AG04449 (cell line): ENCODE measurements at regions of chr1 and their contacts with region 1.

Region 1: GRCh38 chr1:205430696-205431305 is 8.9 kb upstream of the LEMD1 start:
- DNase-seq: no peak
- H3K4me3 ChIP-seq: peak overlapping the region; percentile 56
- CTCF ChIP-seq: peak; percentile 82

Region 2: DNA sequence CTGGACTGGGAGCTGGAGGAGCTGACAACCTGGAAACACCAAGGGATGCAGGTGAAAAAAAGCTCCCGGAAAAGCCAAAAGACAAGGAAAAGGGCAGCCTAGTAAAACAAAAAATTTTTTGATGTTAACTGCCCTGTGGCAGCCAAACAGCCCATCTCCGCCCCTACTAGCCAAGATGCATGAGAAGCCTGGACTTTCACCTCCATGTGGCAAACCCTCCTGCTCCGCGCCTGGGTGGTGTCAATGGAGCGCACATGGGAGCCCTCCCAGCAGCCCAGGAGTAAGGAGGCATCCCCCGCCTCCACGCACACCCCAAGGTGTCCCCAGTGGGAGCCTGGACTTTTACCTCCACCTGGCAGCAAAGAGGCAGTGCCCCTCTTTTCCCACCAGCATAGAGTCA is 39.4 kb before region 1 on chr1:
- CTCF ChIA-PET with region 1: interaction called, 11 read pairs
- POLR2A ChIA-PET with region 1: no interaction called
- DNase-seq: no peak
- H3K4me3 ChIP-seq: no peak overlapping the region
- CTCF ChIP-seq: no peak

Region 3: DNA sequence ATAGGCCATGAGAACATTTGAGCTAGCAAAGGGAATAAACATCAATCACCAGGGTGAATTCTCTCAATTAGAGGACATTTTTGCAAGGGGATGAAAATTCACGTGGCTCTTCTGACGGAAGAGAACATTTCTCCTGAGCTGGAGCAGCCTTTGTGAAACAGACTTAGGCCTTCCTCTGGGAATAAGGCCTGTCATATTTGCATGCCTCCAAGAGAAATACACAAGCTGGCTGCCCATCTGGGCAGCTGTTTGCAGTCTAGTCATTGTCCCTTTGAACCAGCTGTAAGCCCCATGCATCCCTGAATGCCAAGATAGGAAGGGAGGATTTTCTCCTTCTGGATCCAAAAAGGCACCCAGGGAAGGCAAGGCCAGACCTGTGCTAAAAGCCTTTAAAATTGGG is 14.5 kb before region 1 on chr1:
- CTCF ChIA-PET with region 1: interaction called, 37 read pairs
- POLR2A ChIA-PET with region 1: no interaction called
- DNase-seq: no peak
- H3K4me3 ChIP-seq: no peak overlapping the region
- CTCF ChIP-seq: no peak

Region 4: GRCh38 chr1:205645519-205645918 is 214.7 kb after region 1 on chr1:
- CTCF ChIA-PET with region 1: no interaction called
- POLR2A ChIA-PET with region 1: no interaction called
- DNase-seq: no peak
- H3K4me3 ChIP-seq: no peak overlapping the region
- CTCF ChIP-seq: no peak